Activated CD8-positive, alpha-beta T cell treated with anti-CD3 and anti-CD28 coated beads, Interleukin-2, amount 10 ng/mL, durations not matched to agents 7 days and 5 days (primary cell): ENCODE measurements at regions of chr10 and their contacts with region 1.

Region 1: DNA sequence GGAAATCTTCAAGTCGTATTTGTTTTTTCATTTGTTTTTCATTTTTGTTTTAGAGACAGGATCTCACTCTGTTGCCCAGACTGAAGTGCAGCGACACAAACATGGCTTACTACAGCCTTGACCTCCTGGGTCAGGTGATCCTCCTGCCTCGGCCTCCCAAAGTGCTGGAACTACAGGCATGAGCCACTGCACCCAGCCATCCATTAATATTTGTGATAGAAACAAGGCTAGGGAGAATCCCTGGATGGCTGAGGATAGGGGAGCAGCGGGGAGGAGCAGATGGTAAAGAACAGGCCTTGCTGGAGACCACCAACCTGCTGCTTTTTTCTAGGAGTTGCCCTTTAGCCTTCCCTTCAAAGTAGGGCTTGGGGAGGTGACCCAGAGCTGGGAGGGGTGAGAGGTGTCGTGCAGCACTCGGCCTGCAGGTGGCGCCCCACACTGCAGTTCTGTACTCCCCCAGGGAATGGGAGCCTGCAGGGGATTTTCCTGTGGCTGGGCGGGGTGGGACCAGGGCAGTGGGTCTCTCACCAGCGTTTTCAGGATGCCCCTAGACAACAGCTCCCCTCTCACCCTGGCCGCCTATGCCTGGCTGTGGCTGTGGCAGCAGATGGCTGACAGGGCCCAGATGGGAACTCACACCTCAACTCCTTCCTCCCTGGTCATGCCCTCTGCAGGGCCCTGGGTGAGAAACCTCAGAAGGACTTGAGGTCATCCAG is 12.6 kb upstream of the CDH23 start:
- DNase-seq: peak; percentile 77
- ATAC-seq: peak; percentile 95
- H3K4me3 Mint-ChIP-seq: no peak overlapping the region
- H3K27ac Mint-ChIP-seq: no peak overlapping the region
- H3K4me1 Mint-ChIP-seq: no peaks in the 10 kb centered on the region
- H3K27me3 Mint-ChIP-seq: peaks cover 9% of the 10 kb centered on the region

Region 2: GRCh38 chr10:71314028-71314693 is 70.0 kb before region 1 on chr10:
- CTCF ChIA-PET with region 1: interaction called, 11 read pairs
- POLR2A ChIA-PET with region 1: no interaction called
- DNase-seq: peak; percentile 58
- ATAC-seq: peak; percentile 23
- H3K4me3 Mint-ChIP-seq: no peak overlapping the region
- H3K27ac Mint-ChIP-seq: no peak overlapping the region
- H3K4me1 Mint-ChIP-seq: peaks cover 19% of the 10 kb centered on the region
- H3K27me3 Mint-ChIP-seq: peaks cover 8% of the 10 kb centered on the region